ENCODE measurements at regions of chr15 and their contacts with region 1.

Region 1: DNA sequence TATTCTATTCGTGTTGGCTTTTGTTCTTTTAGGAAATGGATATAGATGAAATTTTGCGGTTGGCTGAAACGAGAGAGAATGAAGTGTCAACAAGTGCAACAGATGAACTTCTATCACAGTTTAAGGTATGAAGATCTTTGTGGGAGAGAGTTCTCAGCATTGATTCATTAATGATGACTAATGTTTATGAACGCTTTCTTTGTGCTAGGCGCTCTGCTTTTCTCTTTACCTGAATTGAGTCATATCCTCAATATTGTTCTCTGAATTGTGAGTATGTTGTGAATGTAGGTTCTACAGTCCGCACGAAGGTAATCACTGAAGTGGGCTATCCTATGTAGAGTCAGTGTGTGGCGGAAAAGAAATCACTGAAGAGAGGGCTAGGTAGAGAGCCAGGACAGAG is 81.2 kb downstream of the CHD2 start:
- DNase-seq: no peak
- H3K4me3 ChIP-seq: no peak overlapping the region
- H3K27ac ChIP-seq: peak overlapping the region in 3 of 4 donors; percentile 37 to 78 (median 72)
- H3K4me1 ChIP-seq: peaks cover 0 to 67% (median 65%) of the 10 kb centered on the region in 4 donors
- H3K27me3 ChIP-seq: no peaks in the 10 kb centered on the region
- CTCF ChIP-seq: no peak
- EP300 ChIP-seq: no peak
- POLR2A ChIP-seq: no peak

Region 2: GRCh38 chr15:92383519-92384326 is 597.6 kb before region 1 on chr15:
- intact Hi-C with region 1: no loop called
- DNase-seq: no peak
- H3K4me3 ChIP-seq: no peak overlapping the region
- H3K27ac ChIP-seq: no peak overlapping the region
- H3K4me1 ChIP-seq: no peaks in the 10 kb centered on the region
- H3K27me3 ChIP-seq: peaks cover 0 to 44% (median 0%) of the 10 kb centered on the region in 4 donors
- CTCF ChIP-seq: peak in 1 of 3 experiments; percentile 28
- EP300 ChIP-seq: no peak
- POLR2A ChIP-seq: no peak

Region 3: DNA sequence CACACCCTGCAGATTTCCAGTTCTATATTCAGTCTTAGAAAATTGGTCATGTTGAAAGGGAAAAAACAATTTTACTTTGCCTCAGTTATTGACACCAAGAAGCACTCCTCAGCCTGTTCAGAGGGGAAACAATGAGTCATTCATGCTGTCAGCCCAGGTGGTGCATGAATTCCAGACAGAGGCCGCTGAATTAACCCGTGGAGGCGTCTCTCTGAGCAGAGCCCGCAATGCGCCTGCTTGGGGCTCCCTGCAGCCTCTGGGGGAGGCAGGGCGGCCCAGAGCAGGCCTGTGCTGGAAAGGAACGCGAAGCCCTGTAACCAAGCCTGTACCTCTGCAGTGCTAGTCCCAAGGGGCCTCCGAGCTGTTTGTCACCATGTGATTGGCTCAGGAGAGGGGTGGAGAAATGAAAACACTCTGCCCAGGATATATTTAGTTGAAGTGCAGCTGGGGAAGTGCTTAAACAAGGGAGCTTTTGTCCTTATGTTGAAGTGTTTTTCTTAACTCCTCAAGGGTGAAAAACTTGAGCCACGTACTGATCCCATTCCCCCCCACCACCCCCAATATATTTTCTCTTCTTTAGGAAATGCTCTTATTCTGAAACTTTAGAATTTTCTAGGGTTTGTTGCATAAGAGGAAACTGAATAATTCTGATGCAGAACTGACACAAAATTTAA is 149.5 kb before region 1 on chr15:
- intact Hi-C with region 1: no loop called
- DNase-seq: peak; percentile 97
- H3K4me3 ChIP-seq: peak overlapping the region; percentile 32 to 51 (median 43)
- H3K27ac ChIP-seq: peak overlapping the region; percentile 87 to 93 (median 92)
- H3K4me1 ChIP-seq: peaks cover 39 to 57% (median 52%) of the 10 kb centered on the region in 4 donors
- H3K27me3 ChIP-seq: no peaks in the 10 kb centered on the region
- CTCF ChIP-seq: peak in 1 of 3 experiments; percentile 8
- EP300 ChIP-seq: no peak
- POLR2A ChIP-seq: peak; percentile 27

Region 4: DNA sequence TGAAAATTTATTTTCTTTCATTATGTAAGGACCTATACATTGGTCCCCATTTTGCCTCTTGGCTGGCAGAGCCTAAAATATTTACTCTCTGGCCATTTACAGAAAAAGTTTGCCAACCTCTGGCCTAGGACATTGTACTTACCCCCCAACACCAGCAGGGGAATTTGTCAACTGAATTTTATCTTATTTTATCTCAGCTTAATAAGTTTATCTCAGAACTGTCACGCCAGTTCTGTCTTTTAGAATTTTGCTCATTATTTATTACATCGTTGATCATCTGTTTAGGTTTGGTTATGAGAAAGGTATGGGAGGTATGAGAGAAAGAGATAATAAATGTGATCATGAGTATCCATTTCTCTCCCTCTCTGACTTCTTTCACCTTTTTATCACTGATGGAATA is 42.9 kb before region 1 on chr15:
- intact Hi-C with region 1: loop called (anchors 5 kb)
- DNase-seq: no peak
- H3K4me3 ChIP-seq: no peak overlapping the region
- H3K27ac ChIP-seq: no peak overlapping the region
- H3K4me1 ChIP-seq: peaks cover 6 to 24% (median 20%) of the 10 kb centered on the region in 4 donors
- H3K27me3 ChIP-seq: no peaks in the 10 kb centered on the region
- CTCF ChIP-seq: peak in 1 of 3 experiments; percentile 31
- EP300 ChIP-seq: no peak
- POLR2A ChIP-seq: no peak